HEK293 (cell line): ENCODE measurements at regions of chr13 and their contacts with region 1.

Region 1: GRCh38 chr13:21176220-21176982 is at the starts of genes MRPL57 and SKA3:
- H3K4me3 ChIP-seq: peak within 1 kb of the TSS; percentile 98
- H3K27ac ChIP-seq: peak within 1 kb of the TSS; percentile 87
- H3K4me1 ChIP-seq: no peaks in the 10 kb centered on the region
- CTCF ChIP-seq: 0 out of 2 replicates have a peak, but pooled peaks have one; percentile 40

Region 2: DNA sequence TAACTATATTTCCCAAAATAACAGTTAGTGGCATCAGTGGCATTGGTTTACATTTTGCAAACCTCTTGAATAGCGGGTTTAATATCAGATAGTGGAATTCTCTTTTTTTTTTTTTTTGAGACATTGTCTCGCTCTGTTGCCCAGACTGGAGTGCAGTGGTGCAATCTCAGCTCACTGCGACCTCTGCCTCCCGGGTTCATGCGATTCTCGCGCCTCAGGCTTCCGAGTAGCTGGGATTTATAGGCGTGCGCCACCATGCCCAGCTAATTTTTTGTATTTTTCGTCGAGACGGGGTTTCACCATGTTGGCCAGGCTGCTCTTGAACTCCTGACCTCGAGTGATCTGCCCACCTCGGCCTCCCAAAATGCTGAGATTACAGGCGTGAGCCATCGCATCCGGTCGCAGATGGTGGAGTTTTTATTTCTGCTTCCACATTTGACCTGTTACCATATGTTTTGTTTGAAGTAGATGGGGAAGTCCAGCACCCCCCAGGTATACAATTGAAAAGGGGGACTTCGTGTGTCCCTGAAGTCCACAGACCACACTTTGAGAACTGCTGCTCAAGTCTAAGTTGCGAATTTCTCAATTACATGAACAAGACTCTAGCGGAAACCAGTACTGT is 233.4 kb before region 1 on chr13:
- CTCF ChIA-PET with region 1: interaction called, 10 read pairs
- POLR2A ChIA-PET with region 1: interaction called, 7 read pairs
- H3K4me3 ChIP-seq: no peak overlapping the region
- H3K27ac ChIP-seq: no peak overlapping the region
- H3K4me1 ChIP-seq: peaks cover 3% of the 10 kb centered on the region; the same call in 1 of the 2 replicates
- CTCF ChIP-seq: no peak

Region 3: DNA sequence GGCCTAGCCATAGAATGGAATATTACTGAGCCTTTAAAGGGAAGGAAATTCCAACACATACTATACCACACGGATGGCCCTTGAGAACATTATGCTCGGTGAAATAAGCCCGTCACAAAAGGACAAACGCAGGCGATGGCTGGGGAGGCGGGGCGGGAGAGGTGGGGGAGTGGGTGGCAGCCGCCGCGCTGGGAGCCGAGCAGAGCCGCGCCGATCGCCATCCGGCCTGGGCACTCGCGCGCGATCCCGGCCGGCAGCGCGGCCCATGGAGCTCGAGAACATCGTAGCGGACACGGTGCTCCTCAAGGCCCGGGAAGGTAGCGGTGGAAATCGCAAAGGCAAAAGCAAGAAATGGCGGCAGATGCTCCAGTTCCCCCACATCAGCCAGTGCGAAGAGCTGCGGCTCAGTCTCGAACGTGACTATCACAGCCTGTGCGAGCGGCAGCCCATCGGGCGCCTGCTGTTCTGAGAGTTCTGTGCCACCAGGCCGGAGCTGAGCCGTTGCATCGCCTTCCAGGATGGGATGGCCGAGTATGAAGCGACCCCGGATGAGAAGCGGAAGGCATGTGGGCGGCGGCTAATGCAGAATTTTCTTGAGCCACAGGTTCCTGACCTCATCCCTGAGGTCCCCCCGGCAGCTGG is 142.6 kb after region 1 on chr13:
- CTCF ChIA-PET with region 1: no interaction called
- POLR2A ChIA-PET with region 1: no interaction called
- H3K4me3 ChIP-seq: no peak overlapping the region
- H3K27ac ChIP-seq: no peak overlapping the region
- H3K4me1 ChIP-seq: no peaks in the 10 kb centered on the region
- CTCF ChIP-seq: no peak

Region 4: DNA sequence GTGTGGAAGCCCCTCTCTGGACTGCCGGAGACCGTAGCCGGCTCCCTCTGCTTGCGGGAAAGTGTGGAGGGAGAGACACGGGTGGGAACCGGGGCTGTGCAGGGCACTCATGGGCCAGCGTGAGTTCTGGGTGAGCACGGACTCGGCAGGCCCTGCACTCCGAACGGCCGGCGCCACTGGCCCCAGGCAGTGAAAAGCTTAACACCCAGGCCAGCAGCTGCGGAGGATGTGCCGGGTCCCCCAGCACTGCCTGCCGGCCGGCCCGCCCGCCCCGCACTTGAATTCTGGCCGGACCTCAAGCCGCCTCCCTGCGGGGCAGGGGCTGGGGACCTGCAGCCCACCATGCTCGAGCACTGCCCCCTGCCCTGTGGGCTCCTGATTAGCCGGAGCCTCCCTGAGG is 641.5 kb after region 1 on chr13:
- CTCF ChIA-PET with region 1: no interaction called
- POLR2A ChIA-PET with region 1: no interaction called
- H3K4me3 ChIP-seq: no peak overlapping the region
- H3K27ac ChIP-seq: no peak overlapping the region
- H3K4me1 ChIP-seq: 0 out of 2 replicates have a peak, but pooled peaks cover 3% of the 10 kb centered on the region
- CTCF ChIP-seq: no peak